ENCODE measurements at regions of chr18 and their contacts with region 1.

Region 1: DNA sequence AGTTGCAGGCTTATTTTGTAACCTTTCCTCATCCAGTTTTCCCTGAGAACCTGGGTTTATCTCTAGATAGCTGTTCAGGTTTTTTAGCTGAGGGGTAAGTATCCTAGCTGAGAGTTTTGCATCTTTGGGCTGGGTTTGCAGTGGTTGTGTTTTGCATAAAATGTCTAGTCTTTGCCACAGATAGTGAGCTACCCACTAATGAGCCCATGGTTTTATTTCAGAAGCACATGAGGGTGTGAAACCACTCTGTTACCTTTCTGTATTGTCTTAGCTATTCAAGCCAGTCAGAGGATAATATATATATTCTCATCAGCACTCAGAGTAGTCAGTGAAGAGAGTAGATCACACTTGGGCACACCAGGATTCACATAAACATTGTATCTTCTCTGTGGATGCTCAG is 24.6 kb upstream of the TXNDC2 start:
- DNase-seq: no peak
- H3K4me3 ChIP-seq: no peak overlapping the region
- H3K27ac ChIP-seq: no peak overlapping the region
- H3K4me1 ChIP-seq: peaks cover 0 to 13% (median 9%) of the 10 kb centered on the region in 4 donors
- H3K27me3 ChIP-seq: no peaks in the 10 kb centered on the region
- CTCF ChIP-seq: no peak
- EP300 ChIP-seq: no peak
- POLR2A ChIP-seq: no peak

Region 2: DNA sequence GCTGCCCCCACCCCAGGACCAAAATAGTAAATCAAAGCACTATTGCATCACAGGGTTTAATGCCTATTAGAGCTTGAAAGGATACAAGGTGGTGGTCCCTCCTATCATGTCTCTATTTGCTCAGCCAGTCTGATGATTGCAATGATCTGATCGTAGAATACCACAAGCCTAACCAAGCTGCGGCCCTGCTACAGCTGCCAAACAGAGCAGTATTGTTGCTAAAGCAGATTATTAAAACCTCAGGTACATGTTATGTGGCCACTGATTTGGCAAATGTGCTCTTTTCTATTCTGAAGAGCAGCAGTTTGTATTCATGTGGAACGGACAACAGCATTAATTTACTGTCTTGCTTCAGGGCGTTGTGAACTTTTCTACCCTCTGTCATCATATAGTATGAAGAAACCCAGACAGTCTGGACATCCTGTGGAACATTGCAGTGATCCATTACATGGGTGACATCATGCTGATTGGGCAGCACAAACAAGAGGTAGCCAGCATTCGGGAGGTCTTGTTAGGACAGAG is 44.3 kb after region 1 on chr18:
- intact Hi-C with region 1: loop called (anchors 5 kb)
- DNase-seq: no peak
- H3K4me3 ChIP-seq: no peak overlapping the region
- H3K27ac ChIP-seq: no peak overlapping the region
- H3K4me1 ChIP-seq: no peaks in the 10 kb centered on the region
- H3K27me3 ChIP-seq: no peaks in the 10 kb centered on the region
- CTCF ChIP-seq: no peak
- EP300 ChIP-seq: no peak
- POLR2A ChIP-seq: no peak

Region 3: DNA sequence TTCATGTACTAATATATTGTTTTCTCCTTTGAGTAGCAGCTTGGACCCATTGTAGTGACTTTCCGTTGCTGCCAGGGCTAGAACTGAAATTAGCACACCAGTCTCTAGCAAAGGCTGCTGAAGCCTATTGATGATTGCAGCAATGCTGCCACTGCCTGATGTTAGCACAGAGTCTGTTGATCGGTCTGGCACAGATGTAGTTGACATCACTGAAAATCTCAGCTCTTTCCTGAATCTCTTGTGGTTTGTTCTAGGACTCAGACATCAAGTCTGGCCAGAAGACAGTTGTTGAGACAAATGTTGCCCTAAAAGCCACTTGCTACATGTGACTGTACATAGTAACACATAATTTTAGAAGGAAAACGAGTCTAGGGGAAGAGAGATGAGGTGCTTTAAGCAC is 99.9 kb after region 1 on chr18:
- intact Hi-C with region 1: no loop called
- DNase-seq: no peak
- H3K4me3 ChIP-seq: no peak overlapping the region
- H3K27ac ChIP-seq: no peak overlapping the region
- H3K4me1 ChIP-seq: peaks cover 2 to 21% (median 6%) of the 10 kb centered on the region in 4 donors
- H3K27me3 ChIP-seq: no peaks in the 10 kb centered on the region
- CTCF ChIP-seq: no peak
- EP300 ChIP-seq: no peak
- POLR2A ChIP-seq: no peak

Measured in esophagus muscularis mucosa (tissue), 4 donors.